ENCODE measurements at regions of chr12 and their contacts with region 1.

Region 1: DNA sequence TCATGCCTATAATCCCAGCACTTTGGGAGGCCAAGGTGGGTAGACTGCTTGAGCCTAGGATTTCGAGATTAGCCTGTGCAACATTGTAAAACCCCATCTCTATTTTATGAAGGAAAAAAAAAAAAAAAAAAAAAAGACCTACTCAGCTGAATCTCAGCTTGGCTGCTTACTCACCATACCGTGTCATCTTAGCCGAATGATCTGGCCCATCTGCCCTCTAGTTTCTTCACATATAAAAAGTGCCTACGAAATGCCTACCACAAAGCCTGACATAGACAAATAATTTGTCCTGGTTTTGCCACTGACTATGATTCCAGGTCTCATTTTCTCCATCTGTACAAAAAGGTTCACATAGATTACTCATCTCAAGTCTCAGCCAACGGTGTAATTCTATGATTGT is 10.1 kb downstream of the DIABLO start:
- H3K4me3 ChIP-seq: no peak overlapping the region
- H3K27ac ChIP-seq: no peak overlapping the region
- H3K4me1 ChIP-seq: no peaks in the 10 kb centered on the region
- CTCF ChIP-seq: no peak

Region 2: DNA sequence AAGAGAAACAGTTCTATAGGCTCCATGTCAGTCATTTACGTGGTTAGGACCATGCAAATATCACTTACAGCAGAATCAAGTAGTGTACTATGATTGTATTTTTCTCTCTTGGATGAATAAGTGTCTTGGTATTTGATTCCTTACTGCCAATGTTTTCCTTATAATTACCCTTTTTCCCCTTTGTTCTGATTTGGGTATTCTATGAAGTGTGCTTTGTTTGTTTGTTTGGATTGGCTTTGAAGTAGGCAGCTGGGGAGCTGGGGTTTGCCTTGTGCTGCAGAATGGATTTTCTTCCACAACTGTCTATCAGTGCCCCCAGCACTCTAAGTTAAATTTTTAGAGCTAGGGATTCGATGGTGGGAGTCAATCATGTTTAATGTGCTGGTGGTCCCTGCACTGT is 490.8 kb before region 1 on chr12:
- CTCF ChIA-PET with region 1: no interaction called
- POLR2A ChIA-PET with region 1: no interaction called
- H3K4me3 ChIP-seq: no peak overlapping the region
- H3K27ac ChIP-seq: no peak overlapping the region
- H3K4me1 ChIP-seq: no peaks in the 10 kb centered on the region
- CTCF ChIP-seq: no peak

Region 3: DNA sequence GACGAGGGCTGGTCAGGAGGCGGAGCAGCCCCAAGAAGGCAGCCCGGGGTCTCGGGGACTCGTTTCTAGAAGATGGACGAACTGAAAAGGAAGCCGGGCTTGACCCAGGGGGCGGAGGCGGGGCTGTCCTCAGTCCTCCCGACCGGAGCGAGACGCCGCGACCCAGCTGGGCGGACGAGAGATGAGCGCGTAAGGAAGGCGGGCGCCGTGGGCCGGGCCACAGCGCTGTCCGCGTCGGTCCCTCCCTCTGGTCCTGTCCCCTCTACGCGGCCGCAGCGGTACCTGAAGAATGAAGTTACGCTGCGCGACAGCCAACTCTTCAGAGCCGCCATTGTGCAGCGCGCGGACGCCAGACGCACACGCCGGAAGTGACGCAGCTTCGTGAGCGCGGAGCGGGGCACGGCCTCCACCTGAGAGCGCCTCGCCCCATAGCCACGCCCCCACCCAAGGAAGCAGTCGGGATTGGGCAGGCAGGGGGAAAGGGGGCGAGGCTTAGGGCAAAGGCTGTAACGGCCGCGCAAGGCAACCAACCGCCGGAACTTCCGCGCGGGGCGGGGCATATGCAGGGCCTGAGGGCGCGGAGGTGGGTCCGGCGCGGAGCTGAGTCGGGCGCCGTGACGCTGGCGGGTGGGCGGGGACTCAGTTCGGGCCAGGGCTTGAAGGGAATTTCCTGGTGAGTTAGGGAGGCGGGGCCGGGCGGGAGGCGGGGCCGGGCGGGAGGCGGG is 10.1 kb after region 1 on chr12 and contains the start of gene DIABLO:
- CTCF ChIA-PET with region 1: interaction called, 6 read pairs
- POLR2A ChIA-PET with region 1: interaction called, 10 read pairs
- H3K4me3 ChIP-seq: peak within 1 kb of the TSS; percentile 98
- H3K27ac ChIP-seq: peak within 1 kb of the TSS; percentile 88
- H3K4me1 ChIP-seq: peaks cover 11% of the 10 kb centered on the region
- CTCF ChIP-seq: no peak